BJ (cell line): ENCODE measurements at regions of chr18 and their contacts with region 1.

Region 1: DNA sequence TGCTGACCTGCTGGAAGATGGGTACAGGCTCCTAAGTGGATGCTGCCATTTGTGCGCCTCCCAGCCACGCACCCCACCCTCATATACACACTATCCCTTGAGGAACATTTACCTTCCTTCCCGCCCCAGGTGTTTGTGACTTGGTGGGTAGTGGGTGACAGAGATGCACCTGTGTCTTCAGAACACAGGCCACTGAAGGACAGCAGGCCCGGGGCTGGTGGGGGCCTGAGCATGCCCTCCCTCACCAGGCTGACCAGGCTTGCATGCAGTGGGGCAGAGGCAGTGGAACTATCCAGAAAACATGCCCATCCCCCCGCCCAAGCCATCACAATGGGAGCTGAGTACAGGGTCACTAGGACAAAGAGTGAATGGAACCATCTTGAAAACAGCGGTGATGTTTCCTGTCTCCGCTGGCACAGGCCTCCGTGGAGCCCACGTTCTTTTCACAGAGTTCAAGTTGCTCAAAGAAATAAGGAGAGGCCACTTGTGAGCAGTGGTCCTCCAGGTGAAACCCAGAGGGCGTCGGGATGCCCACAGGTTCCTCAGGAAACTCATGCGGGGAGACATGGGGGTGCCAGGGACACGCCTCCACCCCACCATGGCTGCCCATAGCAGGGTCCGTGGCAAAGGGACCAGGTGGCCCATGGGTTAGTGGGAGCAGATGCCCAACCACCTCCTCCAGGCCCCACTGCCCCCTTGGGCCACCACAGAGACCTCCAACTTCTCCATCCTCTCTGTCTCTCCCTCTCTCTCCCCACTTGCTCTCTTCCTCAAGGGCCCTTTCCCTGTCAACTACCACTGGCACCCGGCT is 90.9 kb downstream of the MALT1 start:
- DNase-seq: no peak
- H3K4me3 ChIP-seq: no peak overlapping the region
- H3K27me3 ChIP-seq: no peaks in the 10 kb centered on the region; the same call in none of the 2 replicates
- CTCF ChIP-seq: no peak

Region 2: DNA sequence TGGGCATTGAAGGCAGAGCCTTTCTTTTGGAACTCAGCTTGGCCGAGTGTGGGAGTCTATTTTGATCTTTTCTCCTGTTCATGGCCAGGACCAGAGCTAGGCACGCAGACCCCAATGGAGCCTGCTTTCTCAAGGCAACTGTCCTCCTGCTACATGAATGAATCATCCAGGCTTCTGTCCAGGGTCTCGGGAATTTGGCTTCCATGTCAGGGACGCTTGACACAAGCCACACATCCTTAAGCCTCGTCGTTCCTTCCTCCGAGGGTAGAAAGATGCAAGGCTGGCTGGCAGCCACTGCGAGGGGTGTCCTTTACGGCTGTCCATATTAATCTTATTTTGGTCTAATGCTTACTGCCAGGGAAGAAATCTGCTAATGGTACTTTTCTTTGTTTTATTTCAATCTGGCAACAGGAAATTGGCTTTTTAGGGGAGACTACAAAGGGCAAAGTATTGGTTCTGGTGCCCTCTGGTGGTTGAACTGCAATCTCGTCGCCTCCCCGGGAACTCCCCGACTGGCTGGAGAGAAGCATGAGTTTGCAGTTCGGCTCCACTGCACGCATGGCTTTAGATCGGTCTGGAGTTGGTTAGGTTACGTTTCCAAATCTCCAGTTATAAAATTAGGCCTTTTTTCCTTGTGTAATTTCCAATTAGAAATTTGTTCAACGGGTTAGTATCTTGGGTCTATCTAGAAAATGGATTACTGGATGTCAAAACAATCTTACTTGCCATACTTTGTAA is 268.5 kb before region 1 on chr18:
- CTCF ChIA-PET with region 1: interaction called, 21 read pairs
- POLR2A ChIA-PET with region 1: no interaction called
- DNase-seq: peak; percentile 25
- H3K4me3 ChIP-seq: no peak overlapping the region
- H3K27me3 ChIP-seq: no peaks in the 10 kb centered on the region
- CTCF ChIP-seq: peak; percentile 85

Region 3: DNA sequence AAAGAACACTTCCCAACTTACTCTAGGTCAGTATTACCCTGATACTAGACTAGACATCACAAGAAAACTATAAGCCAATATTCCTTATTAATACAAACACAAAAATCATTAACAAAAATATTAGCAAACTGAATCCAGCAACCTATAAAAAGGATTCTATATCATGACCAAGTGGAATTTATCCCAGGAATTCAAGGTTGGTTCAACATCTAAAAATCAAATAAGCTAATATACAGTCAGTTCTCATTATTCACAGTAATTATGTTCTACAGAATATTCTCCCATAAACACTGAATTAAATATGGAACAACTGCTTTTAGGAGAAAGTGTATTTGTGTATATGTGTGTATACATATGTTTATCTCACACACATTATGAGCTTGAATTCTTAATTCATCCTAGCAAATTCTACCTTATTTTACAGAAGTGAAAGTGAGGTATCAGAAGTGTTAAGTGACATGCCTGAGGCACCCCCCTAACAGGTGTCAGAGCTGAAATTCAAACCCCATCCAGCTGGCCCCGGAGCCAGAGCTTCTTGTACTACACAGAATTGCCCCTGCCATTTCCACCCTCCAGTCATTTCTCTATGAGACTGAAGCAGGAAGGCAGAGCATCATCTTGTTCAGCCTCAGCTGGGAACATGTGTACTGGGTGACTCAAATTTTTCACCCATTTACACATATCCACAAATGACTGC is 13.1 kb before region 1 on chr18:
- CTCF ChIA-PET with region 1: interaction called, 36 read pairs
- POLR2A ChIA-PET with region 1: no interaction called
- DNase-seq: no peak
- H3K4me3 ChIP-seq: no peak overlapping the region
- H3K27me3 ChIP-seq: no peaks in the 10 kb centered on the region
- CTCF ChIP-seq: no peak

Region 4: DNA sequence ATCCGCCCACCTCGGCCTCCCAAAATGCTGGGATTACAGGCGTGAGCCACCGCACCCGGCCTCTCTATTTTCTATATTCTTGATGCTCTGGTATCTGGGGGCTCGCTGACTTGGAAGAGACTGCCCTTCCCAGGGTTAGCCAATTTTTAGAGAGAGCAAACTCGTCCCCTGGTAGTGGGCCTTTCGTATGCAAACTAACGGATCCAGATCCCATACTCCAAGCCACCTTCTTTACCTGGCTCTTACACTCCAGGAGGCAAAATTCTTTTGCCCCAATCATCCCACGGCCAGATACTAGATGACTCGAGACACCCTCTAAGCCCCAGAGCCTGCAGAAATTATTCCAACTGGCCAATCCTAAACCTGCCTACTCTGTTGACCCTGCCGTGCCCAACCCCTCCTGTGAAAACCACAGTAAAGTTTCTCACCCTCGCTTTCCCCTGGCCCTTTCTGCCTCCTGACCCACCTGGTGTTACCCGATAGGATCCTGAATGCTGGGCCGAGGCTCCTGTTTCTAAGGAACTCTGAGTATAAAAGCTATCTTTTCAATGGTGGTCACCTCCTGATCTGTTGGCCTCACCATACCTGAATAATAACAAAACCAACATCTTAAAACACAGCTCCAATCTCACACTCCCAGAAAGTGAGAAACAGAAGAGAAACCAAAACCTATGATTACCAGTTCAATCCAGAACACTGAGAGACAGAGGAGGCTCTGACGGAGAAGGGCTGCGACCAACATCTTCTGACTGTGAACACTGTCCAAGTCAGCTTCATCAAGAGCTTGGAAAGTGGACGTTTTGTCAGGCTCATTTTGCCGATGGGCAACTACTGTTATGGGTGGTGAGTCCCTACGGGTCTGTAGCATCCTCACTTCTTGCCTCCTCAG is 44.9 kb after region 1 on chr18:
- CTCF ChIA-PET with region 1: no interaction called
- POLR2A ChIA-PET with region 1: no interaction called
- DNase-seq: no peak
- H3K4me3 ChIP-seq: no peak overlapping the region
- H3K27me3 ChIP-seq: no peaks in the 10 kb centered on the region
- CTCF ChIP-seq: no peak

Region 5: GRCh38 chr18:58867281-58867961 is 105.2 kb after region 1 on chr18:
- CTCF ChIA-PET with region 1: no interaction called
- POLR2A ChIA-PET with region 1: no interaction called
- DNase-seq: no peak
- H3K4me3 ChIP-seq: peak overlapping the region; percentile 6; the same call in 1 of the 2 replicates
- H3K27me3 ChIP-seq: no peaks in the 10 kb centered on the region
- CTCF ChIP-seq: no peak